ENCODE measurements at regions of chr17 and their contacts with region 1.

Region 1: GRCh38 chr17:42843358-42843934 is 934 bp upstream of the AOC2 start:
- DNase-seq: no peak
- ATAC-seq: peak; percentile 58 to 83
- H3K4me3 ChIP-seq: no peak overlapping the region
- H3K27ac ChIP-seq: no peak overlapping the region
- H3K4me1 ChIP-seq: no peaks in the 10 kb centered on the region
- H3K27me3 ChIP-seq: no peaks in the 10 kb centered on the region
- CTCF ChIP-seq: peak; percentile 83 to 91 (median 89)
- POLR2A ChIP-seq: no peak

Region 2: DNA sequence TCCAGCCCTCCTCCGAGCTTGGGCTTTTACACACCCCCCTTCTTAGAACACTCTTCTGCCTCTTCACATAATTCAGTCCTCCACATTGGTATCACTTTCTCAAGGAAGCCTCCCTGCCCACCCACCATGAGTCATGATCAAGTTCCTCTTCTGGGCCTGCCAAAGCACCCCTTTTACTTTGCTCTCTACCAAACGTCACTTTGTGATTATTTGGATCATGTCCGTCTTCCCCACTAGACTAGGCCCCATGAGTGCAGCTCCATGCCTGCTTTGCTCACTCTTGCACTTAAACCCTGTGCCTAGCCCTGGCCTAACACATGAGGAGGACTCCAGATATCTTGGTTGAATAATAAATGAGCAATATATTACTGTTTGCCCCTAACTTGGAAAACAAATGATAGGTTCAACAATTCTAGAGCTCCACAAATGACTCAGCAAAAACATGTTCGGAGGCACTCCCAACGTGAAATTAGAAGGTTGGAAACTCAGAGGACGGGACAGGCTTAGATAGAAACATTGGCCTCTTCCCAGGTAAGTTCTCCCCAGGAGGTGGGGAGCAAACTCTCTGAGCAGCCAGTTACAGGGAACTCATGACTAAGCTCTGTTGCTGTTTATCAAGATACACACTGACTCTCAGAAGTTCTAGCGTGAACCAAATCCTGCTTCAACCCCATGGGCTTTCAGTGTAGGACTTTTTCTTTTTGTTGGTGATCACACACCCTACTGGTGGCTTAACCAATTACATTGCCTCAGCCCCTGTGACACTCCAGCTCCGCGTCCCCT is 85.5 kb after region 1 on chr17:
- in situ Hi-C with region 1: loop called in 3 of 4 experiments (anchors 5 to 10 kb)
- intact Hi-C with region 1: loop called (anchors 2 kb)
- DNase-seq: peak; percentile 5 to 19
- ATAC-seq: peak; percentile 92 to 93
- H3K4me3 ChIP-seq: no peak overlapping the region
- H3K27ac ChIP-seq: peak overlapping the region; percentile 17 to 71 (median 52)
- H3K4me1 ChIP-seq: peaks cover 0 to 6% of the 10 kb centered on the region in 2 donors
- H3K27me3 ChIP-seq: peaks cover 0 to 4% (median 0%) of the 10 kb centered on the region in 3 donors
- CTCF ChIP-seq: peak in 4 of 5 experiments; percentile 46 to 62 (median 56)
- POLR2A ChIP-seq: no peak

Region 3: DNA sequence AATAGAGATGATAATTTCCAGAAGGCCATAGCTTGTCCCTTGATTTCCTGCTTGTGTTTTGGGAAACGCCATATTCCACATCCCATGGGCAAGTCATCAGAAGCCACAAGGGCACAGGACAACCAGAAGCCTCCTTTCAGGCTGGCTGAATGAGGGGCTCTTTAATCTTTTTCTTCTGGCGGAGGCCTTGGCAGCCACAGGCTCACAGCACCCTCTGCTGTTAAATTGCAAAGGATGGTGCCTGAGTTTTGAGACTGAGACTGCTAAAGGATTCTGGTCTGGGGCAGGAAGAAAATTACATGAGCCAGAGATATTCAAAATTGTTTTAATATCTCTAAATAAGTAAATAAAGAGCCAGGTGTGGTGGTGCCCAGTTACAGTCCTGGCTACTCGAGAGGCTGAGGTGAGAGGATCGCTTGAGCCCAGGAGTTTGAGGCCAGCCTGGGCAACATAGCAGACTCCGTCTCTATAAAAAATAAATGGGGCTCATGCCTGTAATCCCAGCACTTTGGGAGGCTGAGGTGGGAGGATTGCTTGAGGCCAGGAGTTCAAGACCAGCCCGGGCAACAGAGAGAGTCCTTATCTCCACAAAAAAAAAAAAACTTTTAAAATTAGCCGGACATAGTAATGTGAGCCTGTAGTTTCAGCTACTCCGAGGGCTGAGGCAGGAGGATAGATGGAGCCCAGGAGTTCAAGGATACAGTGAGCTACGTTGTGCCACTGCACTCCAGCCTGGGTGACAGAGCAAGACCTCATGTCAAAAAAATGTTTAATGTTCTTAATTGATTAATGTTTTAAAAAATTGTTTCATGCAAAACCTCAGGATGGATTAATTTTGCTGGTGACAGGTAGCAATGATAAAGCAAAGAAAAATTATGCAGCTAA is 94.5 kb after region 1 on chr17:
- in situ Hi-C with region 1: loop called in 1 of 4 experiments (anchors 5 kb)
- intact Hi-C with region 1: loop called (anchors 1 kb)
- DNase-seq: no peak
- ATAC-seq: peak; percentile 47 to 53
- H3K4me3 ChIP-seq: no peak overlapping the region
- H3K27ac ChIP-seq: no peak overlapping the region
- H3K4me1 ChIP-seq: no peaks in the 10 kb centered on the region
- H3K27me3 ChIP-seq: no peaks in the 10 kb centered on the region
- CTCF ChIP-seq: peak; percentile 21 to 65 (median 59)
- POLR2A ChIP-seq: no peak